ENCODE measurements at regions of chr5 and their contacts with region 1.

Region 1: DNA sequence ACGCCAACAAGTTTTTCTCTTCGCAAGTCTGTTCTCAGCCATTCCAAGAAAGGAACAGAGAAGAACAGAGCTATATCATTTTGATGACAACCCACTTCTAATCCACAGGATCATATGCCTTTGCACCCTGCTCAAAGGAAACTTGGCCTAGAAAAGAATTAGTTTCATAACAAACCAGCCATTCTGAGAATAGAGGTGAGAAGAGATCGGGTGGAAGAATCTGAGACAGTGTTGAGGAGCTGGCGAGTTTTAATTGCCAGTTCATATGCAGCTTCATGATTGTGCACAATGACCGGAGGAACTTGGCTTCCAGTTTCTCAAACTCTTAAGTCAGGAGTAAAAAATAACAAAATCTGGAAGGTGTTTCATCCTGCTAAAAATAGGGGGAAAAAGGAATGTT is 380.0 kb downstream of the NR2F1-AS1 start:
- DNase-seq: no peak
- ATAC-seq: no peak
- H3K4me3 ChIP-seq: no peak overlapping the region
- H3K27ac ChIP-seq: peak overlapping the region; percentile 49; the same call in 1 of the 2 replicates
- H3K4me1 ChIP-seq: no peaks in the 10 kb centered on the region
- H3K27me3 ChIP-seq: no peaks in the 10 kb centered on the region
- CTCF ChIP-seq: no peak

Region 2: GRCh38 chr5:92734211-92734940 is 466.7 kb before region 1 on chr5:
- CTCF ChIA-PET with region 1: no interaction called
- POLR2A ChIA-PET with region 1: no interaction called
- in situ Hi-C with region 1: no loop called
- intact Hi-C with region 1: loop called (anchors 5 kb)
- DNase-seq: no peak
- ATAC-seq: no peak
- H3K4me3 ChIP-seq: no peak overlapping the region
- H3K27ac ChIP-seq: peak overlapping the region; percentile 48; the same call in 1 of the 2 replicates
- H3K4me1 ChIP-seq: no peaks in the 10 kb centered on the region; the same call in 1 of the 2 replicates
- H3K27me3 ChIP-seq: no peaks in the 10 kb centered on the region
- CTCF ChIP-seq: no peak

Region 3: GRCh38 chr5:93186076-93186682 is 14.9 kb before region 1 on chr5:
- CTCF ChIA-PET with region 1: no interaction called
- POLR2A ChIA-PET with region 1: no interaction called
- in situ Hi-C with region 1: no loop called
- intact Hi-C with region 1: no loop called
- DNase-seq: no peak
- ATAC-seq: no peak
- H3K4me3 ChIP-seq: no peak overlapping the region
- H3K27ac ChIP-seq: peak overlapping the region; percentile 42; the same call in 1 of the 2 replicates
- H3K4me1 ChIP-seq: no peaks in the 10 kb centered on the region; the same call in 1 of the 2 replicates
- H3K27me3 ChIP-seq: no peaks in the 10 kb centered on the region
- CTCF ChIP-seq: no peak

Measured in Panc1 (cell line).